Spleen (tissue), 13 donors: ENCODE measurements at regions of chr4 and their contacts with region 1.

Region 1: GRCh38 chr4:1167247-1167949 is 5.0 kb downstream of the SPON2 start:
- DNase-seq: peak; percentile 96
- H3K4me3 ChIP-seq: peak overlapping the region; percentile 54 to 95 (median 77)
- H3K27ac ChIP-seq: peak overlapping the region; percentile 22 to 92 (median 82)
- H3K4me1 ChIP-seq: peaks cover 11 to 89% (median 52%) of the 10 kb centered on the region in 6 donors
- H3K27me3 ChIP-seq: peaks cover 0 to 38% (median 24%) of the 10 kb centered on the region in 7 donors
- CTCF ChIP-seq: peak; percentile 84 to 97 (median 92)
- POLR2A ChIP-seq: no peak

Region 2: DNA sequence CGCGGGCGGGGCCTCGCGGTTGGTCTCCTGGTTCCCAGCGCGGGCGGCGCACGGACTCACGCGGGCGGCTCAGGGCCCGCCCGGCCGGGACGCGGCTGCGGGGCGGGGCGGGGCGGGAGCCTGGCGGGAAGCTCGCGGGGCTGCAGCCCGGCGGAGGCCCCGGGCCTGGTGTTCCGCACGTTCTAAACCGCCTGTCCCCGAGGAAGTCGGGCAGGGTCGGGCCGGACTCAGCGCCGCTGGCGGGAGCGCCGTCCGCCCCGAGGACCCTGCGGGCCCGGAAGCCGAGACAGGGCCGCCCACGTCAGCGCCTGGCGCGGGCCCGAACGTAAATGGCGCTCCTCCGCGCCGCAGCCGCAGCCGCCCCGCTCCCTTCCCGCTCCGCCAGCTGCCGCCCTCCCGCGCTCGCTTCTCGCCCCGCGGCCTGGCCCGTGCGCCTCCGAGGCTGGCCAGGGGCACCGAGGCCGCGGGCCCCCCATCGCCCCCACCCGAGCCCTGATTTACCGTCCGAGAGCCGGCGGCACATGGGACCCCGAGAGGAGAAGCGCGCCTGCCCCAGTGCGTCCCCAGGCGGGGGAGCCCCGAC is 81.8 kb after region 1 on chr4:
- intact Hi-C with region 1: loop called (anchors 10 kb)
- DNase-seq: peak; percentile 97
- H3K4me3 ChIP-seq: peak overlapping the region; percentile 57 to 93 (median 68)
- H3K27ac ChIP-seq: peak overlapping the region; percentile 95 to 99 (median 98)
- H3K4me1 ChIP-seq: peaks cover 46 to 84% (median 61%) of the 10 kb centered on the region in 6 donors
- H3K27me3 ChIP-seq: no peaks in the 10 kb centered on the region
- CTCF ChIP-seq: no peak
- POLR2A ChIP-seq: peak in 1 of 3 donors; percentile 41

Region 3: DNA sequence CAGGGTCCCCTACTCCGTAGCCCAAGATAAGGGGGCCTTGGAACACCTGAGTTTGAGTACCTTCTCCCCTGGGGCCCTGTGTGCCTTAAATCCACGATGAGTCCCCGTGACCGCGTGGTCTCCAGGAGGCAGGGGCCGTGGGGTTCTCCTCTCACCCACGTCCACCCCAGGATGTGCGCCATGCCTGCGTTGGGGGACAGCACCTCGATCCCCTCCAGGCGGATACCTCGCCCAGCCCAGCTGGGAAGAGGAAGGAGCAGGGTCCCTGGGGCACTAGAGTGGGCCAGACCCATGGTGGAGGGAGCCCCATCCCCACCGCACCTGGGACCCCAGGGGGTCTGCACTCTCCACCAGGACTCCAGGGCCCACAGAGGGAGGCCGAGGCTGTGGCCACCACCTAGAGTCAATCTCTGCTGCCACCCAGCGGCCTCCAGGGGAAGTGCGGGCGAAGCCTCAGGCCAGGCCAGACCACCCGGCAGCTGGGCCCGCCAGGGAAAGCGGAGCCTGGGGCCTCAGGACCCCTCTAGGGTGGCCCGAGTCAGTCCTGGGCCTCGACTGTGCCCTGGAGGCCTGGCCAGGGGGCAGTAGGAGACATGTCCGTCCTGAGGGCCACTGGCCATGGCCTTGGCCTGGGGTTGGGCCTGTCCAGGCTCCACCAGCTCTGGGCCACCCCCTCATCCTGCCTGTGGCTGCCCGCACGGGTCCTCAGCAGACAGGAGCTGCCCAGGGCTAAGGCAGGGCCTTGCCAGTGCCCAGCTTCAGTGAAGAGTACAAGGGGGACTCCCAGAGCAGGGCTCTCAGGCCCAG is 461.7 kb after region 1 on chr4:
- intact Hi-C with region 1: no loop called
- DNase-seq: peak; percentile 91
- H3K4me3 ChIP-seq: no peak overlapping the region
- H3K27ac ChIP-seq: no peak overlapping the region
- H3K4me1 ChIP-seq: peaks cover 0 to 8% (median 5%) of the 10 kb centered on the region in 6 donors
- H3K27me3 ChIP-seq: peaks cover 0 to 18% (median 0%) of the 10 kb centered on the region in 7 donors
- CTCF ChIP-seq: peak; percentile 85 to 100 (median 96)
- POLR2A ChIP-seq: no peak